ENCODE measurements at regions of chr2 and their contacts with region 1.

Region 1: GRCh38 chr2:105235388-105236054 is 6.0 kb upstream of the GPR45 start:
- DNase-seq: peak; percentile 85
- H3K4me3 Mint-ChIP-seq: no peak overlapping the region
- H3K27ac Mint-ChIP-seq: no peak overlapping the region
- H3K4me1 Mint-ChIP-seq: peaks cover 12% of the 10 kb centered on the region
- H3K27me3 Mint-ChIP-seq: peaks cover under 1% of the 10 kb centered on the region
- CTCF ChIP-seq: peak; percentile 50

Region 2: DNA sequence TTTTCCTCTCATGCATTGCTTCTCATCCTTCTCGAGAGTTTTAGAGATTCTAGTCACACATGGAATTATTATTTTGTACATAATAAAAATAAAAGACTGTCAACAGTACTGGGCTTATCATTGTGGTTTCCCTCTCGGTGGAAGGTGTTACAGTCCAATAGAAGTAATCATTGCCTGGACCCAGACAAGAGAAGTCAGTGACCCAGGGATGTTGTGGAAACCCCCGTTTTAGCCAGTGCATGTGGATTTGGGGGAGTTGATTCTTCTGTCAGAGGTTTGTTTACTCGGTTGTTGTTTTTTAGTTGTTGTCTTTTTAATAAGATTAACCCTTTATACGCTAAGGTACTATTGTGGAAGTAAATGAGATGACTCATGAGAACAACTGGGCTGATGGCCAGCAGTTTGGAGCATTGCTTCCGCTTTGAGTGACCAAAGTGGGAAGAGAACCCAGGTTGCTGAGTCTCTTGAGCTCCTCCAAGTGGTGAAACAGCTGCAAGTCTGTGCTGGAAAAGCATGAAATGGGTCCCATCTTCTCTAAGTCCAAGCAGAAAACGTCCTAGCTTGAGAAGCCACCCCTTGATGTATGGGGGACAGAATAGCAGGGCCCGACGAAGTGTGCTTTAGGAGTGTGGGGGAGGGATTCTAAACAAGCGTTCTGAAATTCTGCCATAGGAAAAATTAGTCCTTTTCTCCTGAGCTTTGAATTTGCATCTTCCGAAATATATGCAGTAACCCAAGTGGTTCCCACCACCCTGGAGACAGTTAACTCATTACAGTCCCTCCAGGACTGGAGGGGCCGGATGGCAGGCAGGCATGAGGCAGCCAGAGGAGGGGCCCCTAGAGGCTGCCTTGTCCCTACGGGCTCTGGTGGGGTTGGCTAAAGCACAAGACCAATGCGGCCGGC is 55.8 kb before region 1 on chr2:
- CTCF ChIA-PET with region 1: interaction called, 15 read pairs
- POLR2A ChIA-PET with region 1: no interaction called
- intact Hi-C with region 1: loop called (anchors 1 kb)
- DNase-seq: peak; percentile 93
- H3K4me3 Mint-ChIP-seq: no peak overlapping the region
- H3K27ac Mint-ChIP-seq: no peak overlapping the region
- H3K4me1 Mint-ChIP-seq: peaks cover 5% of the 10 kb centered on the region
- H3K27me3 Mint-ChIP-seq: peaks cover 27% of the 10 kb centered on the region
- CTCF ChIP-seq: peak; percentile 47

Region 3: GRCh38 chr2:105220604-105221003 is 14.9 kb before region 1 on chr2:
- CTCF ChIA-PET with region 1: interaction called, 10 read pairs
- POLR2A ChIA-PET with region 1: no interaction called
- intact Hi-C with region 1: no loop called
- DNase-seq: no peak
- H3K4me3 Mint-ChIP-seq: no peak overlapping the region
- H3K27ac Mint-ChIP-seq: no peak overlapping the region
- H3K4me1 Mint-ChIP-seq: no peaks in the 10 kb centered on the region
- H3K27me3 Mint-ChIP-seq: peaks cover 35% of the 10 kb centered on the region
- CTCF ChIP-seq: no peak

Region 4: DNA sequence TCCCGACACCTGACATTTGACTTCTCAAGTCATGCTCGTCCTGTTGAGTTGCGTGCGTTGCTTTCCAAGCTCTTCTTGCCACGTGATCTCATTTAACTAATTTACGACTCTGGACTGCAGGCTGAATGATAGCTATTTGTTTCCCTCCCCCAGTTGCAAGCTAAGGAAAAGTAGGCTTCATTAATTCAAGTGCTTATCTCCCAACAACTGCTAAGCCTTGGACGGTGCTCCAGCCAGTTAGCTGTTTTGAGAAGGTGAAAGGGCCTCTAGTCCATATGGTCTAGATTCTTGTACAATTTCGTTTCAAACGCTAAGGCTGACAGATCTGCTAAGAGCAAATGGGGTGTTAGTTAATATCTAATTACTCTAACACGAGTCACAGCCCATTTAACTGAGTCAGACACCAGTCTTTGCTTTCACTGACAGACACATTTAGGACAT is 27.1 kb after region 1 on chr2:
- CTCF ChIA-PET with region 1: interaction called, 10 read pairs
- POLR2A ChIA-PET with region 1: no interaction called
- intact Hi-C with region 1: no loop called
- DNase-seq: no peak
- H3K4me3 Mint-ChIP-seq: no peak overlapping the region
- H3K27ac Mint-ChIP-seq: no peak overlapping the region
- H3K4me1 Mint-ChIP-seq: peaks cover 6% of the 10 kb centered on the region
- H3K27me3 Mint-ChIP-seq: no peaks in the 10 kb centered on the region
- CTCF ChIP-seq: no peak